Panc1 (cell line): ENCODE measurements at regions of chr9 and their contacts with region 1.

Region 1: DNA sequence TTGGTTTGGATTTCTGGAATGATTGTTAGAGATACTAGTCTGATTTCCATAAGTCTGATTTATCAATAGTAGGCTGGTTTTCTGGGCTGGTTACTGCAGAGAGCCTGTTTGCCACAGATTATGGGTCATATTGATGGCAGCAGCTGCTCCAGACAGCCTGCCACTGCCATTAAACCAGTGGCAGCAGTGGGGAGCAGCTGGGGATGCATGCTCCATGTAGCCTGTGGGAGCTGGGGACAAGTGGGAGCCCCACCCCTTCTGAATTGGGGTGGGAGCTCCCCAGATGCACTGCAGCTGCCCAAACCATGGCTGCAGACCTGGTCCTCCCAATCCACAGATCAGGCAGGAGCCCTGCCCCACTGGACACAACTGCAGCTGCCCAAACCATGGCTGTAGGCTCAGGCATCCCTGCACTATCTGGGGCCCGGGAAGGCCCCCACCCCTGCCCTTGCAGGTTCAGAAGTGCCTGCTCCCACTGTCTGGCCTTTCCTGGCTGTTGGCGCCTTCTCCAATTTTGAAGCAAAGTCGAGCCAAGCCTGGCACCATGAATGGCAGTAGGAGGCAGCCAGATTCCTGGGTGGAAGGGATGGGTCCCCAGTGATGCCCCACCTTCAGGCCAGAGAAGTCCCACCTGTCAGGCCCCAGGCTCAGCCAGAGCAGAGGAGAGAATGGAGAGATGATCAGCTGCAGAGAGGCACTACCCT is 402.9 kb upstream of the TYRP1 start:
- DNase-seq: no peak
- ATAC-seq: no peak
- H3K4me3 ChIP-seq: no peak overlapping the region
- H3K27ac ChIP-seq: no peak overlapping the region
- H3K4me1 ChIP-seq: no peaks in the 10 kb centered on the region
- H3K27me3 ChIP-seq: no peaks in the 10 kb centered on the region
- CTCF ChIP-seq: no peak

Region 2: GRCh38 chr9:12305211-12305610 is 14.9 kb after region 1 on chr9:
- CTCF ChIA-PET with region 1: no interaction called
- POLR2A ChIA-PET with region 1: no interaction called
- in situ Hi-C with region 1: no loop called
- intact Hi-C with region 1: no loop called
- DNase-seq: no peak
- ATAC-seq: no peak
- H3K4me3 ChIP-seq: no peak overlapping the region
- H3K27ac ChIP-seq: no peak overlapping the region
- H3K4me1 ChIP-seq: no peaks in the 10 kb centered on the region
- H3K27me3 ChIP-seq: no peaks in the 10 kb centered on the region
- CTCF ChIP-seq: no peak

Region 3: GRCh38 chr9:12516573-12516972 is 226.3 kb after region 1 on chr9:
- CTCF ChIA-PET with region 1: interaction called, 15 read pairs
- POLR2A ChIA-PET with region 1: no interaction called
- in situ Hi-C with region 1: no loop called
- intact Hi-C with region 1: no loop called
- DNase-seq: no peak
- ATAC-seq: no peak
- H3K4me3 ChIP-seq: no peak overlapping the region
- H3K27ac ChIP-seq: no peak overlapping the region
- H3K4me1 ChIP-seq: no peaks in the 10 kb centered on the region
- H3K27me3 ChIP-seq: no peaks in the 10 kb centered on the region
- CTCF ChIP-seq: no peak